ENCODE measurements at regions of chr2 and their contacts with region 1.

Region 1: DNA sequence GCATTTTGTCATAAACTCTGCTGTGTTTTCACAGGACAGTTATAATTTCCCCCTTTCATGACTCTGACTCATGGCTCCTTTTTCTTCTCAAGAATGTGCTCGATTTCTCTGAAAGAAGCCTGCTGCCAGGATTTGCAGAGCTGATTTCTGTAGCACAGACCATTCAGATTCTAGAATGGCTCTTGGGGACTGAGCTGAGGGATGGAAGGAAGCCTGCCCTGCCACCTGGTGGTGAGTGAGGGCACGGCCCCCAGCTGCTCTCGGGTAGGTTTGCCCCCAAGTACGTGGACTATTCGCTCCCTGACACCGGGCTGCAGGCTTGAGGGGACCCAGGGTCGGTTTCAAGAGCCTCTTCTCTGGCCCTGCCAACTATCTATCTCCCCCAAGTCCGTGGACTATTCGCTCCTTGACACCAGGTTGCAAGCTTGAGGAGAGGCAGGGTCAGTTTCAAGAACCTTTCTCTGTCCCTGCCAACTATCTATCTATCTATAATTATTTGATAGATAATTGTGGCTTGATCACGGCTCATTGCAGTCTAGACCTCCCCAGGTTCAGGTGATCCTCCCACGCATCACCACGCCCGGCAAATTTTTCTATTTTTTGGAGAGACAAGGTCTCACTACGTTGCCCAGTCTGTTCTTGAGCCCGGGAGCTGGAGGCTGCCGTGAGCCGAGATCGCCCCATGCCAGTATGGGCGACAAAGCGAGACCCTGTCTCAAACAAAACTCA is 1.4 kb upstream of the SMYD5 start:
- H3K4me3 Mint-ChIP-seq: no peak overlapping the region
- H3K27ac Mint-ChIP-seq: no peak overlapping the region
- H3K4me1 Mint-ChIP-seq: peaks cover 26% of the 10 kb centered on the region
- H3K27me3 Mint-ChIP-seq: peaks cover 8% of the 10 kb centered on the region

Region 2: DNA sequence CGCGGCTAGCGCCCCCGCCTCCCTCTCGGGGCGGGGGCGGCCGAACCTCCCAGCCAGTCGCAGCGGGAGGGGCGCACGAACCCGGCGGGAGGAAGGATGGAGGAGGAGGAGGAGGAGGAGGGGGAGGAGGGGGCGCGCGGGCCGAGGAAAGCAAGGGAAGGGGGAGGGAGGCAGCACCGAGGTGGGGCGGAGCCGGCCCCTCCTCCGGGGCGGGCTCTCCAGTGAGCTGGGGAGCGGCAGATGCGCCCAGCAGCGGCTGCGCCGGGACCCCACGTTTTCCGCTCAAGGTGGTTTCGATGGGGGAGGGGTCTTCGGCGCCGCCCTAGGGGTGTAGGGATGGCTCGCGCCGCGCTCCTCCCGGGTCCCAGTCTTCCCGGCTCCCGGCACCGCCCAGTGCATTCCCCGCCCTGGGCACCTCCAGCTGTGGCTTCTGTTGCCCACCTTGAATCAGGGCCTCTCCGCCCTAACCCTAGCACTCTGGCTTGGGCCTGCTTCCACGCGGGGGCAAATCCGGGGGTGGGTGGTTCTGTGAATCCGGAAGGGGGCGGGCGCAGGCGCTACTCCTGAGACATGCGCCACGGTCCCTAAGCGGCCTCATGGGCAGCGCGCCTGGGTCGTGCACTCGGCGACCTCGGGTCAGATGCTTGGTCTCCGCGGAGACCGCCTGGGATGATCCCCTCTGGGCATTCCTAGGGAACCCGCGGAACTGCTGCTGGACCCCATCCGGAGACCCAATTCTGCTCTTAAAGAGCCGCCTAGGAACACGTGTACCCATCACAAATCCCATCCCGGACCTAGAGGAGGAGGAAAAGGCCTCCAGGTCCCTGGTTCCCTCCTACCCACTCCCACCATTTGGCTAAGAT is 71.9 kb after region 1 on chr2 and contains the start of gene FBXO41:
- intact Hi-C with region 1: loop called (anchors 2 kb)
- H3K4me3 Mint-ChIP-seq: peak within 1 kb of the TSS; percentile 72
- H3K27ac Mint-ChIP-seq: peak within 1 kb of the TSS; percentile 79
- H3K4me1 Mint-ChIP-seq: peaks cover 45% of the 10 kb centered on the region
- H3K27me3 Mint-ChIP-seq: peaks cover 16% of the 10 kb centered on the region

Measured in dendritic cell treated with granulocyte-macrophage colony-stimulating factor and Interleukin-4, amounts not matched to agents 40 ng/mL and 50 ng/mL, for 4 days (primary cell).